Activated CD8-positive, alpha-beta memory T cell treated with anti-CD3 and anti-CD28 coated beads, Interleukin-2, amount 10 ng/mL, durations not matched to agents 7 days and 5 days (primary cell): ENCODE measurements at regions of chr2 and their contacts with region 1.

Region 1: GRCh38 chr2:165902929-165903328 is 50.6 kb downstream of the TTC21B start:
- DNase-seq: no peak
- ATAC-seq: peak; percentile 87
- H3K4me3 Mint-ChIP-seq: peak overlapping the region; percentile 44
- H3K27ac Mint-ChIP-seq: peak overlapping the region; percentile 75
- H3K4me1 Mint-ChIP-seq: peaks cover 25% of the 10 kb centered on the region
- H3K27me3 Mint-ChIP-seq: no peaks in the 10 kb centered on the region

Region 2: GRCh38 chr2:165376571-165376975 is 526.4 kb before region 1 on chr2:
- CTCF ChIA-PET with region 1: no interaction called
- DNase-seq: no peak
- ATAC-seq: no peak
- H3K4me3 Mint-ChIP-seq: no peak overlapping the region
- H3K27ac Mint-ChIP-seq: no peak overlapping the region
- H3K4me1 Mint-ChIP-seq: no peaks in the 10 kb centered on the region
- H3K27me3 Mint-ChIP-seq: peaks cover 3% of the 10 kb centered on the region

Region 3: GRCh38 chr2:165794536-165794928 is 108.4 kb before region 1 on chr2:
- CTCF ChIA-PET with region 1: no interaction called
- DNase-seq: peak; percentile 90
- ATAC-seq: peak; percentile 92
- H3K4me3 Mint-ChIP-seq: peak overlapping the region; percentile 96
- H3K27ac Mint-ChIP-seq: peak overlapping the region; percentile 98
- H3K4me1 Mint-ChIP-seq: peaks cover 46% of the 10 kb centered on the region
- H3K27me3 Mint-ChIP-seq: peaks cover 11% of the 10 kb centered on the region

Region 4: DNA sequence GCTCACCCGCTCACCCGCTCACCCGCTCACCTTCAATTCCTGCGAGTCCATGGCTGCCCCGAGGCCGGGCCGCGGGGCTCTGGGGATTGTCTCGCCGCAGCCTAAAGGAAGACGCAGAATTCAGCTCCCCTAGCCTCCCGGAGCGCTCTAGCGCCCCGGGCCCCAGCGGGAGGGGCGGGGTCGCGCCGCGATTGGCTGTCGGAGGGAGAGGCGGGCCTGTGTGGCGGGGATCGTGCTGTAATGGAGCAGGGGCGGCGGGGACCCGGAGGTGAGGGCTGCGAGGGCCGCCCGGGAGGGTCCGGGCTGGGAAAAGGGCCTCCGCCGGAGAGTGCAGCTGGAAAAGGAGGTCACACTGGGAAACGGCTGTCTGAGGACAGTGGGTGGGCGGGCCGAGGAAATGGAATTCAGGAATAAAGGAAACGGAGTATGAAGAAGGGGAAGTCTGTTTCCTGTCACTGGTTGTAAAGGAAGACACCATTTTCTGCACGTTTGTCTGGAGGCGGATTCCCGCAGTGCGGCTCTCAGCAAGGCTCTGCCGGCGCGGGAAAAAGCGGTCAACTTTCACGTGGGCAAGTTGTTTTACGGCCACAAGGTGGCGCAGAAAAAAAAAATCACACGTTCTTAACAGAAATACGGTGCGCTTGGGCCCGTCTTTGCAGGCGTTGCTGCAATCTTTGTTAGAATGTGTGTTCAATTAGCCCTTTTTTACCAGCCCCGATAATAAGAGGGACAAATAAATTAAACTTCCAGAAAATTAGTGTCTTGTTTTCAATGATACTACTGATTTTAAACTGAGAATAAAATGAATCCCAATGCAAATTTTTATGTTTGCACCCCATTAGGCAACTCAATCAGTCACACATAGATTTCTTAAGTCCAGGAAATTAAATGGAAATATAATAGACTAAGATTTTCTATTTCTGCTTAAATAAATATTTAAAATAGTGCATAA is 51.0 kb after region 1 on chr2 and contains the start of gene TTC21B:
- CTCF ChIA-PET with region 1: interaction called, 10 read pairs
- DNase-seq: peak; percentile 93
- ATAC-seq: peak; percentile 98
- H3K4me3 Mint-ChIP-seq: peak within 1 kb of the TSS; percentile 34
- H3K27ac Mint-ChIP-seq: no peak within 1 kb of the TSS
- H3K4me1 Mint-ChIP-seq: peaks cover 11% of the 10 kb centered on the region
- H3K27me3 Mint-ChIP-seq: no peaks in the 10 kb centered on the region
- total RNA-seq, gene TTC21B: 13.8 to 20.2 TPM